HCT116 (cell line): ENCODE measurements at regions of chr19 and their contacts with region 1.

Region 1: GRCh38 chr19:52296773-52297600 is at the start of gene ZNF480:
- DNase-seq: peak; percentile 18
- ATAC-seq: peak; percentile 82
- H3K4me3 ChIP-seq: peak within 1 kb of the TSS; percentile 73 to 89
- H3K27ac ChIP-seq: peak within 1 kb of the TSS; percentile 64
- H3K4me1 ChIP-seq: peaks cover 0 to 12% of the 10 kb centered on the region in 2 experiments; a peak in 2 of 4 replicates
- H3K27me3 ChIP-seq: no peaks in the 10 kb centered on the region
- CTCF ChIP-seq: 0 out of 6 replicates have a peak, but pooled peaks of 1 of the 3 experiments have one; percentile 7
- POLR2A ChIP-seq: no peak
- RAD21 ChIP-seq: no peak
- total RNA-seq, gene ZNF480: 11.5 TPM

Region 2: DNA sequence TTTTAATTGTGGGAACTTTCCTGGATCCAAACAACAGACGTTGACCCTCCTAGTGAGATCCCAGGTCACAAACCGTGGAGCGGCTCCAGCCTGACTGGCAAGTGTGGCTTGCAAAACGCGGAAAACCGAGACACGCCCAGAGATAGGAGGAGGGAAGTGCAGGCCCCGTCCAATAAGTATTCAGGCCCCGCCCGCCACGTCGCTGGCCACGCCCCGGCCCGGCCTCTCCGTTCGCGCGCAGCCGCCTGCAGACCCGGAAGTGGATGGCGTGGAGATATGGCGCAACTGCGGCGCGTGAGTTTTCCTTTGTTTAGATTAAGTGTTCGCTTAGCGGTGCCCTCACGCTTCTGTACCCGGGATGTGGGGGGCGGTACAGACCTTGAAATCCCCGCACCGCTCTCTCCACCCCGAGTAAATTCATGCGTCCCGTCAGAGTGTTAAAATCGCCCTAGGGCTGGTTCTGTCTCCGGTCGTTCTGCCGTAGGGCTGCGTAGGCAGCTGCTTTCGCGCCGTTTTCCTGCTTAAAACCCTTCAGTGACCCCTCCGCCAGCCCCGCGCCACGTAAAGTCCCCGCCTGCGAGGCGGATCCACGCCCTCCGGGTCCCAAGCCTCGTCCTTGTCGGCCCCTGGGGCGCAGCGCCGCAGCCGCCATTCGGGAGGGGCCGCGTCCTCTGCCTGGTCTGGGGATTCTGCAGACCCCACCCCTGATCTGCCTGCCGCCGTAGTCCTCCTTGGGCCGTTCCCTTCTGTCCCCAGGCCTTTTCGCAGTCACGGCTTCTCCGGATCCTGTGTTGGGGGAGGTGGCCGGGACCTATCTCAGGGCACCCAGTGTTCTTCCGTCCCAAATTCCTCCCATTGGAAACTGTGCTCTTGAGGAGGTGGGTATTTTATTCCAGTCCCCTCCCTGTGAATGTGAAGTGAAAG is 27.4 kb before region 1 on chr19 and contains the start of gene ZNF766:
- CTCF ChIA-PET with region 1: no interaction called
- POLR2A ChIA-PET with region 1: no interaction called
- RAD21 ChIA-PET with region 1: no interaction called
- intact Hi-C with region 1: loop called (anchors 2 kb)
- DNase-seq: peak; percentile 81
- ATAC-seq: peak; percentile 98
- H3K4me3 ChIP-seq: peak within 1 kb of the TSS; percentile 98 to 99
- H3K27ac ChIP-seq: peak within 1 kb of the TSS; percentile 84
- H3K4me1 ChIP-seq: peaks cover 0 to 16% of the 10 kb centered on the region in 2 experiments; a peak in 2 of 4 replicates
- H3K27me3 ChIP-seq: no peaks in the 10 kb centered on the region
- CTCF ChIP-seq: no peak
- POLR2A ChIP-seq: peak; percentile 88
- RAD21 ChIP-seq: no peak
- total RNA-seq, gene ZNF766: 17.9 TPM

Region 3: GRCh38 chr19:52626915-52627314 is 329.9 kb after region 1 on chr19:
- CTCF ChIA-PET with region 1: no interaction called
- POLR2A ChIA-PET with region 1: no interaction called
- RAD21 ChIA-PET with region 1: no interaction called
- intact Hi-C with region 1: no loop called
- DNase-seq: no peak
- ATAC-seq: no peak
- H3K4me3 ChIP-seq: no peak overlapping the region
- H3K27ac ChIP-seq: no peak overlapping the region
- H3K4me1 ChIP-seq: no peaks in the 10 kb centered on the region
- H3K27me3 ChIP-seq: no peaks in the 10 kb centered on the region
- CTCF ChIP-seq: no peak
- POLR2A ChIP-seq: no peak
- RAD21 ChIP-seq: no peak